Activated CD8-positive, alpha-beta T cell treated with anti-CD3 and anti-CD28 coated beads, Interleukin-2, amount 10 ng/mL, durations not matched to agents 7 days and 5 days (primary cell): ENCODE measurements at regions of chr6 and their contacts with region 1.

Region 1: GRCh38 chr6:2952557-2953095 is 18.7 kb downstream of the SERPINB6 start:
- DNase-seq: peak; percentile 73
- ATAC-seq: peak; percentile 92
- H3K4me3 Mint-ChIP-seq: peak overlapping the region; percentile 18
- H3K27ac Mint-ChIP-seq: peak overlapping the region; percentile 49
- H3K4me1 Mint-ChIP-seq: peaks cover 14% of the 10 kb centered on the region
- H3K27me3 Mint-ChIP-seq: no peaks in the 10 kb centered on the region

Region 2: DNA sequence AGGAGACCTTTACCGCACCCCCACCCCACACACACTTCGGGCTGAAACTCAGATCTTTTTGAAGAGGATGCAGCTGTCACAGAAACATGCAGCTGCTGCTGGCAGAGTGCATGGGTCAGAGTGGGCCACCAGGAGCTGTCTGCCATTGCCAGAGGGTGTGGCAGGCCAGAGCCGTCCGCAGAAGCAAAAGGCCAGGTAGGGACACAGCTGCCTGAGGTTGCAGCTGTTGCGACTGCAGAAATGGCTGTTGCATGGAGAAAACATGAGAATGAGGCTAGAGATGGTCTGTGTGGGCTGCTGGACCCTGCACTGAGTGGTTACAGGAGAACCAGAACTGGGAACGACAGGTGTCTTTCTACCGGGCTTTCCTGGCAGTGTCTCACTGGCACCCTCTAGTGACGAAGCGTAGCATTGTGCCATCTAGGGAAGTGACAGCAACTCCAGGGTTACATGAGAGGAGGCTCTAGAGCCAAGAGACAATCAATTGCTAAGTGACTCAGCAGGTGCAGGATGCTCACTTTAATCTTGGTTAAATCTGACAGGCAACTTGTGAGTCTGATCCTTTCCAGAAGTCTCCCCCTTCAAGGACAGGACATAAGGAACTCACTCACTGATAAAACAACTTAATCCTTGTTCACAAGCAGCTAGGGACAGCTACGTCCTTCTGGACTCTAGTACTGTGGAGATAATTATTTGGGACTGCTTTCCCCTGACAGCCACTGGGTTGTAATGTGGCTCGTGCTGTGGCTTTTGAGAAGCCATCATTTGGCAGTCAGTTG is 20.5 kb before region 1 on chr6:
- CTCF ChIA-PET with region 1: interaction called, 36 read pairs
- POLR2A ChIA-PET with region 1: interaction called, 4 read pairs
- DNase-seq: peak; percentile 91
- ATAC-seq: peak; percentile 91
- H3K4me3 Mint-ChIP-seq: no peak overlapping the region
- H3K27ac Mint-ChIP-seq: no peak overlapping the region
- H3K4me1 Mint-ChIP-seq: peaks cover 22% of the 10 kb centered on the region
- H3K27me3 Mint-ChIP-seq: no peaks in the 10 kb centered on the region

Region 3: GRCh38 chr6:2940010-2940850 is 12.4 kb before region 1 on chr6:
- CTCF ChIA-PET with region 1: interaction called, 95 read pairs
- POLR2A ChIA-PET with region 1: interaction called, 7 read pairs
- DNase-seq: peak; percentile 87
- ATAC-seq: peak; percentile 85
- H3K4me3 Mint-ChIP-seq: peak overlapping the region; percentile 74
- H3K27ac Mint-ChIP-seq: peak overlapping the region; percentile 94
- H3K4me1 Mint-ChIP-seq: peaks cover 68% of the 10 kb centered on the region
- H3K27me3 Mint-ChIP-seq: no peaks in the 10 kb centered on the region

Region 4: GRCh38 chr6:2976571-2977085 is 24.0 kb after region 1 on chr6:
- CTCF ChIA-PET with region 1: interaction called, 19 read pairs
- POLR2A ChIA-PET with region 1: interaction called, 3 read pairs
- DNase-seq: no peak
- ATAC-seq: no peak
- H3K4me3 Mint-ChIP-seq: no peak overlapping the region
- H3K27ac Mint-ChIP-seq: no peak overlapping the region
- H3K4me1 Mint-ChIP-seq: peaks cover 21% of the 10 kb centered on the region
- H3K27me3 Mint-ChIP-seq: peaks cover 16% of the 10 kb centered on the region

Region 5: DNA sequence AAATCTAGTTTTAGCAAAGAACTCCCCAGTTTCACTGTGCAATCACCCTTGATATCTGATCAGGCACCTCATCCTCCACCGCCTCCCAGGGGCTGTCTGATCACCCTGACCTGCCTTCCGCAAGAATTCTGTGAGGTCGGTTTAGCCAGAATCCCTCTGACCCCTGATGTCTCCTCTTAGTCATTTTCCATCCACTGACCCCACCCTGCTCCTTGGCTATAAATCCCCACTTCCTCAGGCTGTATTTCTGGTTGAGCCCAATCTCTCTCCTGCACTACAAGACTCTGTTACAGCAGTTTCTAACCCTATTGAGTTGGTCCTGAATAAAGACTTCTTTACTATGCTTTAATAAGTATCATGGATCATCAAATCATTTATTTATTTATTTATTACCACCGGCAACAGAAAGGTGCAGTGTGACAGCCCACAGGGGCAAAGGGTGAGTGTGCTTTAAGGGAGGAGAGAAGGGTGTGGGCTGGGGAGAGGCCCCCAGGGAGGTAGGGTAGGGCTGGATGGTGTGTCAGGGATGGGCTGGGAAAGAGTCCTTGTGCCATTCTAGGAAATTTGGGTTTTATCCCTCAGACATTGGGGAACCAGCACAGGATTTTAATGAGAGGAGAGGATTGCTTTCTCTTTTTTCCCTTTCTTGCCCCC is 30.0 kb after region 1 on chr6:
- CTCF ChIA-PET with region 1: interaction called, 74 read pairs
- POLR2A ChIA-PET with region 1: interaction called, 3 read pairs
- DNase-seq: no peak
- ATAC-seq: no peak
- H3K4me3 Mint-ChIP-seq: no peak overlapping the region
- H3K27ac Mint-ChIP-seq: no peak overlapping the region
- H3K4me1 Mint-ChIP-seq: peaks cover 6% of the 10 kb centered on the region
- H3K27me3 Mint-ChIP-seq: peaks cover 21% of the 10 kb centered on the region